Activated T-helper 1 cell treated with anti-CD3 and anti-CD28 coated beads, Interleukin-12 subunit alpha, Interleukin-12 subunit beta, Interleukin-2, Interleukin-4 antibody, amounts not matched to agents 30 ng/mL and 10 ng/mL and 1 ng/mL, durations not matched to agents 14 hours and 24 hours and 36 hours (primary cell): ENCODE measurements at regions of chr19 and their contacts with region 1.

Region 1: GRCh38 chr19:11380653-11381534 is 3.2 kb downstream of the EPOR start:
- DNase-seq: peak; percentile 96
- H3K4me3 Mint-ChIP-seq: peak overlapping the region; percentile 88
- H3K27ac Mint-ChIP-seq: peak overlapping the region; percentile 100
- H3K4me1 Mint-ChIP-seq: peaks cover 32% of the 10 kb centered on the region
- H3K27me3 Mint-ChIP-seq: peaks cover 16% of the 10 kb centered on the region

Region 2: DNA sequence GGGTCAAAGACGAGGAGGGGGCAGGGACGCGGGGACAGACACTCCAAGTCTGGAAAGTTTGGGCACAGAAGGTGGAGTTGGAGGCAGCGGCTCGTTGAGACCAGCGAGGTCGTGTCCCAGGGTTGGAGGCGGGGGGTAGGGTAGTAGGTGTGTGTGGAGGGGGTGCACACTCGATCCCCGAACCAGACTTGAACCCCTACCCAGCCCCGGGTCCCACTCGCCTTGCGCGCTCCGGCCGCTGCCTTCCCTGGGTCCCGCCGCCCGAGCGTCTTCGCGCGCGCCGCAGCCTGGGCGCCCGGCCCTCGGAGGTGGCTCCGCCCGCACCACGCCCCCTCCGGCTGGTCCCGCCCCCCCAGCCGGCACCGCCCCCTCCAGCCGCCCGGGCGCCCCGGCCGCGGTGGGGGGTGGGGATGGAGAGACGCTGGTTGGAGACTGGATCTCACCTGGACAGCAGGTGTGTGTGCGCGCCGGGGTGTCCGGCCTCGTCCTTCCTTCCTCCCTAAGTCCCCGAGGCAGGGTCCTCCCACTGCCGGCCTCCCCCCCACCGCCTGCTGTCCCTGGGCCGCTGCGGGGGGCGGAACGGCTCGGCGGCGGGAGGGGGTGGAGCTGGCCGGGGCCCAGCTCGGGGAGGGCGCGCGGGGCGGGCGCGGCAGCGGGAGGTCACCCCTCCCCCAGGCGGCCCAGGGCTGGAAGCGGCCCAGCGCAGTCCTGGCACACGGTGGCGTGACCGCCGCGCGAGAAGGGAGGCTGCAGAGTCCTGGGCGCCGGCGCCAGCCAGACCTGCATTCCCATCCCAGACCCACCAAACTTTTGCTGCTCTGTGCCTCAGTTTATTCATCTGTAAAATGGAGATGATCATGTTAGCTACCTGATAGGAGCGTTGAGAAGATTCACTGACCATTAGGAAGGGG is 183.4 kb before region 1 on chr19 and contains the start of gene KANK2:
- intact Hi-C with region 1: loop called (anchors 2 kb)
- DNase-seq: peak; percentile 67
- H3K4me3 Mint-ChIP-seq: peak within 1 kb of the TSS; percentile 75
- H3K27ac Mint-ChIP-seq: no peak within 1 kb of the TSS
- H3K4me1 Mint-ChIP-seq: no peaks in the 10 kb centered on the region
- H3K27me3 Mint-ChIP-seq: peaks cover 21% of the 10 kb centered on the region
- total RNA-seq, gene KANK2: 2.7 and 3.9 TPM in 2 replicates

Region 3: GRCh38 chr19:11422163-11423021 is 41.5 kb after region 1 on chr19:
- intact Hi-C with region 1: loop called (anchors 1 kb)
- DNase-seq: peak; percentile 67
- H3K4me3 Mint-ChIP-seq: peak overlapping the region; percentile 72
- H3K27ac Mint-ChIP-seq: no peak overlapping the region
- H3K4me1 Mint-ChIP-seq: peaks cover 31% of the 10 kb centered on the region
- H3K27me3 Mint-ChIP-seq: peaks cover 64% of the 10 kb centered on the region

Region 4: DNA sequence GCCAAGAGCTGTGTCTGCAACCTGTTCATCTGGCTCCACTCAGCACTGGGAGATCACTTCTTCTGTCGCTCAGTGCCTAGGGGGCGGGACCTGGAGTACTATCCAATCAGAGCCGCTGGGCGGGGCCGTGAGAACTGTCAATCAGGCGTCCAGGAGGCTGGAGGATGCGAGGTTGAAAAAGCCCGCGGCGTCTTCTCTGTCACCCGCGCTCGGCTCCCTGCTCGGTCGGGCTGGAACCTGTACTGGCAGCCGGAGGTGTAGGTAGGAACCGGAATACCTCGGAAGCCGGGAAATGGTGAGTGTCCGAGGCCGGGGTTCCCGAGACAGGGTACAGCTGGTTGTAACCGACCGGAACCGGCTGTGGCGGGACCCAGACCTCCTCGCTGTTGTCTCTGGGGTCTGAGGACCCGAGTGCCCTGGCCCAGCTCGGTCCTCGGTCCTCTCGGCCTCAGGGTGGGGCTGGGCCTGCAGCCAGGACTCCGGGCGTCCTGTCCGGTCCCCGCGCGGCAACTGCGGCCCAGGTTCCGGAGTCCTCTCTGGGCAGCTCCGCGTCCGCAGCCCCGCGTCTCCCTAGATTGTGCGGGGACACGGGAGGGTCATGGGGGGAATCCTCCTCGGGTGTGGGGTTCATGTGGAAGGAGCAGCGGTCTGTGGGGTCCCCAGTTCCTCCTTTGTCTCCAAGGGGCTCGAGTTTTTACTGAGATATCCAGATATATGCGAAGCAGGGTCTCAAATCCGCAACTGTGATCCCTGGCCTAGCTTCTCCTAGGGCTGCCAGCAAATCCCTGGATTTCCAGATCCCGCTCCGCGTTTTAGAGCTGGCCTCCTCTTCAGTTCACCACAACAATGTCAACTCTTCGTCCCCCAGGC is 258.9 kb after region 1 on chr19:
- intact Hi-C with region 1: loop called (anchors 1 kb)
- DNase-seq: peak; percentile 78
- H3K4me3 Mint-ChIP-seq: peak overlapping the region; percentile 77
- H3K27ac Mint-ChIP-seq: no peak overlapping the region
- H3K4me1 Mint-ChIP-seq: no peaks in the 10 kb centered on the region
- H3K27me3 Mint-ChIP-seq: no peaks in the 10 kb centered on the region